Activated CD4-positive, alpha-beta T cell treated with anti-CD3 and anti-CD28 coated beads for 36 hours (primary cell): ENCODE measurements at regions of chr7 and their contacts with region 1.

Region 1: DNA sequence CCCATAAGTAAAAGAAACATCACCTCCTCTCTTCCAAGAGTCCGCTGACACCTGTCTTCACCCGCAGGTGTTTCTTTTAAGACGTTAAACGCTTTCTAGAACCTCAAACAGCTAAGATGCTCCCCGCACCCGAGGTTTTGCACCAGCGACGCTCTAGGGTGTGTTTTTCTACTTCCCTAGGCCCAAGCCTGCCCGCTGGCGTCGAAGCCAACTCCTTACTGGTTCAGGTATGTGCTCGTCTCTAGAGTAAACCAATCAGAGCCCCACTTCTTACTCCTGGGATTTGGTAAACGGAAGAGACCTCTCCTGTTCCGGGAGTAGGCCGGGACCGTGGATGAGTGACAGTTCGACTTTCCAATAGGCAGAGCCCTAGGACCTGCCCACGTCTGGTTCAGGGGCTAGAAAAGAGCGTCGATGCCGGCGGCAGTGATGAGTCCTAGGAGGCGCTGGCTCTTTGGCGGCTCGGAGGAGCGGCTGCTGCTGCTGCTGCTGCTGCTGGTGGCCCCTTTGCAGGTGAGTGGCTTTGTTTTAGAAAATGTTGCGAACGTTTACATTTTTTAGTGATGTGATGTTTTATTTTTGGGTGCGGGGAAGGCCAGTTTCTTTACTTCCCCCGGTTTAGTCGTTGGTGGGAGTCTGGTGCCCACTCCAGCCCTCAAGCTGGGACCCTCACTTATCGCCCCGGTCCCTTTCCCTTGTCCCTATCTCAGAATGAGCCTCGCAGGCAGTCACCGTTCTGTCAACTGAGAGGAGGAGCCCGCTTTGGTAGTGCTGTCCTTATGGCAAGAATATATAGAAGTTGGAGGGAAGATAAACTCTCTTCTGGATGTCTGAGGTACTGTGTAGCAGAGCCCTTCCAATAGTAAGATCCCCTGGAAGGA is at the start of gene BPGM:
- DNase-seq: peak; percentile 97
- ATAC-seq: peak; percentile 99
- H3K4me3 Mint-ChIP-seq: no peak within 1 kb of the TSS
- H3K27ac Mint-ChIP-seq: no peak within 1 kb of the TSS
- H3K4me1 Mint-ChIP-seq: peaks cover 44% of the 10 kb centered on the region
- H3K27me3 Mint-ChIP-seq: no peaks in the 10 kb centered on the region
- total RNA-seq, gene BPGM: 17.5 to 18.6 TPM

Region 2: DNA sequence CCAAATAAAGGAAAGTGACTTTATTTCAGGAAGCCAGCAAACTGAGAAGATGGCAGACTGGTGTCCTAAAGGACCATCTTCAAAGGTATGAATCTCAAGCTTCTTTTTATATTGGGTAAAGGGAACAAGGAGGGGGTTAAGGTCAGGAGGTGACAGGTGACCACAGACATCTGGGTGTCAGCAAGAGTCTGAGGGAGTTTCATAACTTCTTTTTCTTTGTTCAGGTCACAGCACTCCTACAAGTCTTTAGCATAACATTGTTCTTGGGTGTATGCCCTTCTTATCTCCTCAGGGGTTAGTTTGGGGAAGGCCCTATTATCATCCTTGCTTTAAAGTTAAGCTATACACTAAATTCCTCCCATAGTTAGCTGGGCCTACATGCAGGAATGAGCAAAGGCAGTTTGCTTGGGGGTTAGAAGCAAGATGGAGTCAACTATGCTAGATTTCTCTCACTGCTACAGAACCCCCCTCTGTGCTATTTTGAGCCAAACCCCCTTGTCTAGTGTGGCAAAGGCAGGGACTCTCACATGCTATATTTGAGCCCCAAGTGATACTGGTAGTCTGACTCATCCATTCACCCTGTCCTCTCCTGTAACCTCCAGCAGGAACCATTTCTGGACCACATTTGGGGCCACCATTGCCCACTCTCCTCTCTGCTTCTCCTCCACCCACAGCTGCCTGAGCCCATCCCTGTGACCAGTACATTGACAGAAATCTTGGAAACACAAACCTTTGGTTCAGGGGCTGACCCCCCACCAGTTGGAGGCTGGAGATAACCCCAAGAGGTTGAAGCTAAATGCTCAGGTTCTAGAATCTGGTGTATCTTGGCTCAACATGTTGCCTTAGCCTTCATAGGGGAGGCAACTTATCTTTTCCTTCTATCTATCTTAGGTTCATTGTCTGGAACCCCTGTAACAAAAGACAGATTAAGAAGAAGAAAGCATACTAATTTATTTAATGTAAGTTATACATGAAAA is 575.0 kb before region 1 on chr7:
- CTCF ChIA-PET with region 1: no interaction called
- POLR2A ChIA-PET with region 1: no interaction called
- intact Hi-C with region 1: no loop called
- DNase-seq: no peak
- ATAC-seq: no peak
- H3K4me3 Mint-ChIP-seq: no peak overlapping the region
- H3K27ac Mint-ChIP-seq: no peak overlapping the region
- H3K4me1 Mint-ChIP-seq: no peaks in the 10 kb centered on the region
- H3K27me3 Mint-ChIP-seq: no peaks in the 10 kb centered on the region

Region 3: DNA sequence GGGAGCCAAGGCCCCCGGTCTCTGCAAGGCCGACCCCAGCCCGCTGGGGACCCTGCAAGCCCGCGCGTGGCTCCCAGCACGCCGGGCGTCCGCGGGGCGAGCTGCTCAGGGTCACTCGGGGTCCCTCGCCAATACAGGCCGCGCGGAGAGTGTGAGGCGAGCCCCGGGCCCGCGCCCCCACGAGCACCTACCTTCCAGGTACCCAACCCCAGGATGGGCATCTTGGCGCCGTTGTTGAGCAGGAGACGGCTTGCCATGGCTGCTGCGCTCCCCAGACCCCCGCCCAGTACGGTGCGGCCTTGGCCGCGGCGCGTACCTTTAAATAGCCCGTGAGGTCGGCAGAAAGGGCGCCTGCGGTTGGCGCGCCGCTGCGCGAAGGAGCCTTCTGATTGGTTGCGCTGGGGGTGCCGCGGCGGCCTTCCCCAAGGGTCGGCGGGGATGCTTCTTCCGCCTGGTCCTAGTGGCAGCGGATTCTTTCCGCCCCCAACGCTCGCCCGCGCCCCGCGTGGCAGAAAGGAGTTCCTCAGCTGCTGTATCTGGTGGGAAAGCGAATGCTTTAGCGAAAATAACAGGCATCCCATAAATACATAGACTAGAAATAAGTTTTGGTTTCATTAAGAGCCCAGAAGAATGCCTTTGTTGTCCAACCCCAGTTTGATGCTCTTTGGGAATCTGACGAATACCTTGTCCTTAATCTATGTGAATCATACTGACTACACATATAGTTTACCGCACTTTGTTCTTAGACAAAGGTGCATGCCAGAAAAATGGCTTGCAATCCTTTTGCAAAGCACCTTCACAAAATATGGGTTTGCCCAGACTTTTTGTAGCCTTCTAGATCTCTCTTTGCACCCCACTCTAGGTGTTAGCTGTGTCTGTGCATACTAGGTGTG is 187.6 kb before region 1 on chr7 and contains the start of gene AKR1B1:
- CTCF ChIA-PET with region 1: no interaction called
- POLR2A ChIA-PET with region 1: no interaction called
- intact Hi-C with region 1: loop called in 1 of 2 experiments (anchors 5 kb)
- DNase-seq: peak; percentile 94
- ATAC-seq: peak; percentile 92
- H3K4me3 Mint-ChIP-seq: peak within 1 kb of the TSS; percentile 83
- H3K27ac Mint-ChIP-seq: peak within 1 kb of the TSS; percentile 76
- H3K4me1 Mint-ChIP-seq: peaks cover 51% of the 10 kb centered on the region
- H3K27me3 Mint-ChIP-seq: no peaks in the 10 kb centered on the region
- total RNA-seq, gene AKR1B1: 88.1 to 120 TPM

Region 4: GRCh38 chr7:134514663-134515062 is 132.0 kb before region 1 on chr7:
- CTCF ChIA-PET with region 1: no interaction called
- POLR2A ChIA-PET with region 1: no interaction called
- intact Hi-C with region 1: no loop called
- DNase-seq: peak; percentile 15
- ATAC-seq: peak; percentile 77
- H3K4me3 Mint-ChIP-seq: no peak overlapping the region
- H3K27ac Mint-ChIP-seq: no peak overlapping the region
- H3K4me1 Mint-ChIP-seq: peaks cover 10% of the 10 kb centered on the region
- H3K27me3 Mint-ChIP-seq: peaks cover 5% of the 10 kb centered on the region

Region 5: GRCh38 chr7:134669845-134670373 is 23.2 kb after region 1 on chr7:
- CTCF ChIA-PET with region 1: interaction called, 5 read pairs
- POLR2A ChIA-PET with region 1: interaction called, 9 read pairs
- intact Hi-C with region 1: loop called (anchors 1 kb)
- DNase-seq: peak; percentile 83
- ATAC-seq: peak; percentile 75
- H3K4me3 Mint-ChIP-seq: peak overlapping the region; percentile 50
- H3K27ac Mint-ChIP-seq: peak overlapping the region; percentile 89
- H3K4me1 Mint-ChIP-seq: peaks cover 51% of the 10 kb centered on the region
- H3K27me3 Mint-ChIP-seq: no peaks in the 10 kb centered on the region

Region 6: DNA sequence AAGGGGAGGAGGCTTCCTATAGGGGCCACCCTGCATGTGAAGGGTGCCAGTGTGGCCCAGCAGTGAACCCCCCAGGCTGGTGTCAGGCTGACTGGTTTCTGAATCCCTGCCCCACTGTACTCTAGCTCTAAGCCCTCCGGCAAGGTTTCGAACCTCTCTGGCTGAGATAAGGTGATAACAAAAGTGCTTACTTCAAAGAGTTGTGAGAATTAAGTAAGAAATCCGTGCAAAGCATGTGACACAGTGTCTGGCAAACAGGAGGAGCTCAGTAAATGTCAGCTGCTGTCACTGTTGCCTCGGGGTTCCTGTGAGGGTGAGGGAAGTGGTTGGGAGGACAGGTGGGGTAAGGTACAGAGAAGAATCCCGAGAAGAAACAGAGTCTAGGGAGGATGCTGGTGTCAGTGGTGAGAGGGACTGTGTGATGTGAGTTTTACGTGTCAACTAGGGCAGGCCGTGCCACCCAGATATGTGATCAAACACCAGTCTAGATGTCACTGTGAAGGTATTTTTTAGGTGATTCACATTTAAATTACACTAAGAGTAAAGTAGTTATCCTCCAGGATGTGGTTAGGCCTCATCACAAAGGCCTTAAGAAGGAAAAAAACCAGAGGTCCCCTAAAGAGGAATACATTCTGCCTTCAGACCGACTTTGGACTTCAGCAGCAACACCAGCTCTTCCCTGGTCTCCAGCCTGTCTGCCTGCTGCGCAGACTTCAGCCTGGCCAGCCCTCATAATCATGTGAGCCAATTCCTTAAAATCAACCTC is 64.4 kb after region 1 on chr7:
- CTCF ChIA-PET with region 1: no interaction called
- POLR2A ChIA-PET with region 1: interaction called, 10 read pairs
- intact Hi-C with region 1: loop called (anchors 1 kb)
- DNase-seq: peak; percentile 80
- ATAC-seq: peak; percentile 94
- H3K4me3 Mint-ChIP-seq: peak overlapping the region; percentile 78
- H3K27ac Mint-ChIP-seq: peak overlapping the region; percentile 97
- H3K4me1 Mint-ChIP-seq: peaks cover 31% of the 10 kb centered on the region
- H3K27me3 Mint-ChIP-seq: no peaks in the 10 kb centered on the region

Region 7: GRCh38 chr7:134986363-134987251 is 339.9 kb after region 1 on chr7 and contains the start of gene AGBL3:
- CTCF ChIA-PET with region 1: interaction called, 3 read pairs
- POLR2A ChIA-PET with region 1: no interaction called
- intact Hi-C with region 1: loop called (anchors 1 to 2 kb)
- DNase-seq: peak; percentile 95
- ATAC-seq: peak; percentile 97
- H3K4me3 Mint-ChIP-seq: peak within 1 kb of the TSS; percentile 91
- H3K27ac Mint-ChIP-seq: peak within 1 kb of the TSS; percentile 95
- H3K4me1 Mint-ChIP-seq: peaks cover 36% of the 10 kb centered on the region
- H3K27me3 Mint-ChIP-seq: no peaks in the 10 kb centered on the region
- total RNA-seq, gene AGBL3: 2.1 to 2.2 TPM

Region 8: GRCh38 chr7:134997214-134997885 is 350.7 kb after region 1 on chr7:
- CTCF ChIA-PET with region 1: no interaction called
- POLR2A ChIA-PET with region 1: no interaction called
- intact Hi-C with region 1: no loop called
- DNase-seq: no peak
- ATAC-seq: no peak
- H3K4me3 Mint-ChIP-seq: no peak overlapping the region
- H3K27ac Mint-ChIP-seq: no peak overlapping the region
- H3K4me1 Mint-ChIP-seq: peaks cover 32% of the 10 kb centered on the region
- H3K27me3 Mint-ChIP-seq: no peaks in the 10 kb centered on the region

Region 9: DNA sequence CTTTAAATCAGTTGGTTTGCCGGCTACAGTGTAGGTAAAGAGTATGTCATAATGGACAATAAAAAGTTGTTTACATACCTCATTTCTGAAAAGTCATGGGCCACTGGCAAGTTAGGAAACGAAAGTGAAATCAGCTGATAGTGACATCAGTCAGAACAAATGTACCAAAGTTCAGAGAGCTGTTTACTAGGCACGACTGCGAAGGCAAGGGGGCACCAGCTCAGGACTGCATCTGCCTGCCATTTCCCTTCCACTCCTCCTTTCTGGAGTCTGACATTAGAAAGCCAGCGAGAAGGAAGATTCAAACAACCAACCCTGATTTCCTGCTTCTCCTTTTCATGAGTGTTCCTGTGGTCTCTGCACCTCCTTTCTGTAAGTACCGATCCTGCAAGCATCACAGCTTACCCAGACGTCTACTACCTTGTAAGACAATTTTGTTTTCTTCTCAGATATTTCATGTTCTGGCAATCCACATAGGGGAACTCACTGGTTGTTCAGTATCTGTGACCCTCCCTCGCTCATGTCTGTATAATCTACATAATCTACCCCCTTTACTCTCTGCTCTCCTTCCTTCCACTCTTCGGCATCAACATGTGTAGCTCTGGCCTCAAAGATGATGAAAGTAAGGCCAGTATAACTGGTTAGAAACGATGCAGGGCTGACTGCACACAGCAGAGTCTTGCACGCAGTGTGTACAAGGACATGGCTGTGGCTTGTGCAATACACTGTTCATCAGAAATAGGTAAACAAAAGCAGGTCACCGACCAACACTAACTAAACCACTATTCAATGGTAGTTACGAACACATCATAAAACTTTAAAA is 501.4 kb after region 1 on chr7 and contains the start of gene TMEM140:
- CTCF ChIA-PET with region 1: interaction called, 3 read pairs
- POLR2A ChIA-PET with region 1: no interaction called
- intact Hi-C with region 1: loop called (anchors 5 kb)
- DNase-seq: peak; percentile 75
- ATAC-seq: peak; percentile 81
- H3K4me3 Mint-ChIP-seq: peak within 1 kb of the TSS; percentile 79
- H3K27ac Mint-ChIP-seq: peak within 1 kb of the TSS; percentile 92
- H3K4me1 Mint-ChIP-seq: peaks cover 52% of the 10 kb centered on the region
- H3K27me3 Mint-ChIP-seq: no peaks in the 10 kb centered on the region
- total RNA-seq, gene TMEM140: 10.8 to 12.1 TPM

Region 10: DNA sequence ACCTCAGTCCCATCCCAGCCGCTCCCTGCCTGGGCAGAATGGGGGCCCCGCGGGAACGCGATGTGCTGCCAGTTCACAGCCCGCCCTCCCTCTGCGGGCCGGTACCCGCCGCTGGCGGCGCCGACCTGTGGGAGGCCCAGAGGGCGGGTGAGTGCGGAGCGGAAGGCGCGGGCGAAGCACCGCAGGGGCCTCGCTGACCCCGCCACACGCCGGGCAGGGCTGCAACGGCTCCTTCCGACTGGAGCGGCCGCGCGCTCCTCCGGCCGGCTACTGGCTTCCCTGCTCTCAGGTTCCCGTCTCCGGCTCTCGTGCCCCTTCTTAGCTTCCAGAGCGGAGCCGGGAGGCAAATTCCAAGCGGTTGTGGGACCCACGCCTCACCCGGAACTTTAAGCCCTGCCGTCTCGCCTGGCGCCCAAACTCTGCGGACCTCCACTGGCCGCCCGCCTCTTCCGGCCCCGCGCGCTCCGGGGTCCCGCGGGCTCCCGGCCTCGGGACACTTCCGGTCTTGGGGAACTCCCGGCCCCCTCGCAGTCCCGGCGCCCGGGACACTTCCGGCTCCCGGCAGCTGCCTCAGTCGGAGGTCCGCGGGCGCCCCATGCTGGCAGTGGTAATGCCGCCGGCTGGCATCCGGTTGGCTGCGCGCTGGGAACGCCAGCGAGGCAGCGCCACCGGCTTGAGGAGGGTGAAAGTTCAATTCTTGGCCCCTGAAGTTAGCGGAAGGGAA is 523.8 kb after region 1 on chr7 and contains the start of gene CYREN:
- CTCF ChIA-PET with region 1: interaction called, 3 read pairs
- POLR2A ChIA-PET with region 1: no interaction called
- intact Hi-C with region 1: loop called (anchors 2 kb)
- DNase-seq: peak; percentile 97
- ATAC-seq: peak; percentile 85
- H3K4me3 Mint-ChIP-seq: peak within 1 kb of the TSS; percentile 88
- H3K27ac Mint-ChIP-seq: peak within 1 kb of the TSS; percentile 96
- H3K4me1 Mint-ChIP-seq: peaks cover 50% of the 10 kb centered on the region
- H3K27me3 Mint-ChIP-seq: no peaks in the 10 kb centered on the region
- total RNA-seq, gene CYREN: 32.6 to 40.5 TPM